ENCODE measurements at regions of chr13 and their contacts with region 1.

Region 1: GRCh38 chr13:75876360-75877050 is 240.4 kb downstream of the LMO7 start:
- DNase-seq: peak; percentile 51 to 71
- ATAC-seq: peak; percentile 92
- H3K4me3 ChIP-seq: no peak overlapping the region
- H3K27ac ChIP-seq: no peak overlapping the region
- H3K4me1 ChIP-seq: peaks cover 0 to 5% of the 10 kb centered on the region in 2 donors
- H3K27me3 ChIP-seq: no peaks in the 10 kb centered on the region

Region 2: DNA sequence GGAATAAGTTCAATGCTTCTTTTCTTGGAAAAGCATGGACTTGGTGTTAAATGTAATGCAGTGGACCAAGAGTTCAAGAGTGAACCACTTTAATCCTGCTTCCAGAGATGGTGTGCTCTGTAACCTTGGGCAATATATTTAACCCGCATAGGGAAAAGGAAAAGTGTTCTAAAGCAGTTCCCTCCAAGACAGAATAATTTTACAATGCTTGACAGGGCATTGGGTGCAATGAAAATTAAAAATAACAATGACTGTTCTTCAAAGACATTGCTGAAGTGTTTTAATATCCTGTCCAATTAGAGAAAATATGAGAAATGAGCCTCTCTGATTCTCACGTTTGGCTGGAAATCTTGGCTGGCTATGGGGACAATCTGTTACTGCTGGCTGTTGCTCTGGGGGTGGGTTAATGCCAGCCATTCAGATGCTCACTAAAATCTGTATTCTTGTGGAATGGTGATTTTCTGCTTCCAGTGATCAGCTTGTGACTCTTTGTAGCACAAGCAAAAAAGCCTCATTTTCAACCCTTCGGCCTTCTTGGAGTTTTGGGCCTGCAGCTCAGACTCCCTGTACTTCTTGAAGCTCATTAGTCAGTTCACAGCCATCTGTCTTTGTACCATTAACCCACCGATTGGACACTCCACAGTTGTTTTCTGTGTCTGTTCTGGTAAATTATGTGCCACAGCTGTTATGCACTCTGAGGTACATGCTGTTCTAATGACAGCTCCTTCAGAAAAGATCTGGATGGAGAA is 70.2 kb after region 1 on chr13:
- intact Hi-C with region 1: no loop called
- DNase-seq: no peak
- ATAC-seq: no peak
- H3K4me3 ChIP-seq: no peak overlapping the region
- H3K27ac ChIP-seq: no peak overlapping the region
- H3K4me1 ChIP-seq: no peaks in the 10 kb centered on the region
- H3K27me3 ChIP-seq: no peaks in the 10 kb centered on the region

Region 3: DNA sequence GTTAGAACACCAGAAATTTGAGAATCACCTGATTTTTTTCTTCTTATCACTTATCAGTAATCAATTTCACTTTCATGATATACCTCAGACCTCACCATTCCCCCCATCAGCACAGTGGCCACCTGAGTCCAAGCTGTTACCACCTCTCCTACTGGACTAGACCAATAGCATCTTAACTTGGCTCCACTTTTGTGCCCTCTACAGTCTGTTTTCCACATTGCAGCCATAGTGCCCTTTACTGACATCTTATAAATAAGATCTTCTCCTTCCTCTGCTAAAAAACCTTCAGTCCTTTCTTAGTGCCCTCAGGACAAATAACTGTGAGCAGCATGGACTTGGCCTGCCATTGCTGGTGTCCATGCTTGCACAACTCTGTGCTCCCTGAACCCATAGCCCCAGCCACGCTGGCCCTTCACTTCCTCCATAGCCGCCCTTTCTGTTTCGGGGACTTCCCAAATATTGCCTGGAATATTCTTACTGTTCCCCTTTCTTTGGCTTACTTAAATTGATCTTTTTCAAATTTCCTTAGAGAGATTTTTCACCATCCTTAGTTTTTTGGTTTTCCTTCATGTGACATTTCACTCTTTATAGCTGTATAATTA is 140.4 kb after region 1 on chr13:
- intact Hi-C with region 1: loop called (anchors 5 to 10 kb)
- DNase-seq: no peak
- ATAC-seq: no peak
- H3K4me3 ChIP-seq: no peak overlapping the region
- H3K27ac ChIP-seq: no peak overlapping the region
- H3K4me1 ChIP-seq: peaks cover 2 to 6% of the 10 kb centered on the region in 2 donors
- H3K27me3 ChIP-seq: no peaks in the 10 kb centered on the region

Region 4: GRCh38 chr13:76307142-76307541 is 430.6 kb after region 1 on chr13:
- intact Hi-C with region 1: no loop called
- DNase-seq: no peak
- ATAC-seq: no peak
- H3K4me3 ChIP-seq: no peak overlapping the region
- H3K27ac ChIP-seq: no peak overlapping the region
- H3K4me1 ChIP-seq: no peaks in the 10 kb centered on the region
- H3K27me3 ChIP-seq: no peaks in the 10 kb centered on the region

Region 5: GRCh38 chr13:76473552-76474134 is 597.1 kb after region 1 on chr13:
- intact Hi-C with region 1: loop called (anchors 2 kb)
- DNase-seq: peak; percentile 70 to 74
- ATAC-seq: peak; percentile 95
- H3K4me3 ChIP-seq: no peak overlapping the region
- H3K27ac ChIP-seq: no peak overlapping the region
- H3K4me1 ChIP-seq: peaks cover 2% of the 10 kb centered on the region in 2 donors
- H3K27me3 ChIP-seq: no peaks in the 10 kb centered on the region

Measured in aorta (tissue), 5 donors.